Posterior vena cava (tissue), 2 donors: ENCODE measurements at regions of chr3 and their contacts with region 1.

Region 1: GRCh38 chr3:186162221-186162620 is 53.3 kb upstream of the ETV5 start:
- DNase-seq: no peak

Region 2: DNA sequence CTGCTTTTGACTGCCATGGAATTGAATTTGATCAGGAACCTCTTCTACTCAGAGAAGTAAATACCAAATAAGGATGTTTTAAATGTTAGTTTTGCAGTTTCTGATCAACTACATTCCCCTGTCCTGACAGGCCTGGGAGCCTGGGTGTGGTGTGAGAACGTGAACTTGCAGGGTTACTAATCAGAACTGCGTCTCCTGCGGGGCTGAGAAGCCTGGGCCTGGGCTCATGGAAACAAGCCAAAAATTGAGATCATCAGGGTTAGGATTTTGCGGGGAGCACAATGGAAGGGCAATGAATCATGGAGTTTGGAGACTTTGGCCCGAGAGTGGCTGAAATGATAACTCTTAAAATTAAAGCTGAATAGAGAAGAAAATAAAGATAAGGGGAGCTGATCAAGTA is 961.6 kb before region 1 on chr3:
- intact Hi-C with region 1: no loop called
- DNase-seq: no peak

Region 3: DNA sequence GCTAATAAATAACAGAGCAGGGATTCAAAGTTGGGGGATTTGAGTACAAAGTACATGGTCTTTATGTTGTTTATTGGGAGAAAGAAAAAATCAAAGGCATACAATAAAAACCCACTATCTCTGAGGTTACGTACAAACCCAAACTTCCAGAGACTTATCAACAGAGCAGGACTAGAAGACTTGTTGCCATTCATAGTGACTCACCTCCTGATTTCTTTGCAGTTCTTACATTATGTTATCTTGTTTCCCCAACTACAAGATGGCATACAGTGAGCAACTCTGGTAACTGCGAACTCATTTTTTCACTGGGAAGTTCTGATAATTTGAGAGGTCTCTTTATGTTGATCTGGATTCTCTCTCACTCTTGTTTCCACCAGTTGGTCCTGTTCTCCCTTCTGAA is 27.3 kb after region 1 on chr3:
- intact Hi-C with region 1: loop called in 1 of 2 experiments (anchors 1 kb)
- DNase-seq: no peak